Right ventricle myocardium superior (tissue), 1 donor: ENCODE measurements at regions of chr1 and their contacts with region 1.

Region 1: GRCh38 chr1:180631766-180632325 is at the start of gene XPR1:
- DNase-seq: peak; percentile 97
- ATAC-seq: peak; percentile 97
- total RNA-seq, gene XPR1: 38.6 TPM

Region 2: DNA sequence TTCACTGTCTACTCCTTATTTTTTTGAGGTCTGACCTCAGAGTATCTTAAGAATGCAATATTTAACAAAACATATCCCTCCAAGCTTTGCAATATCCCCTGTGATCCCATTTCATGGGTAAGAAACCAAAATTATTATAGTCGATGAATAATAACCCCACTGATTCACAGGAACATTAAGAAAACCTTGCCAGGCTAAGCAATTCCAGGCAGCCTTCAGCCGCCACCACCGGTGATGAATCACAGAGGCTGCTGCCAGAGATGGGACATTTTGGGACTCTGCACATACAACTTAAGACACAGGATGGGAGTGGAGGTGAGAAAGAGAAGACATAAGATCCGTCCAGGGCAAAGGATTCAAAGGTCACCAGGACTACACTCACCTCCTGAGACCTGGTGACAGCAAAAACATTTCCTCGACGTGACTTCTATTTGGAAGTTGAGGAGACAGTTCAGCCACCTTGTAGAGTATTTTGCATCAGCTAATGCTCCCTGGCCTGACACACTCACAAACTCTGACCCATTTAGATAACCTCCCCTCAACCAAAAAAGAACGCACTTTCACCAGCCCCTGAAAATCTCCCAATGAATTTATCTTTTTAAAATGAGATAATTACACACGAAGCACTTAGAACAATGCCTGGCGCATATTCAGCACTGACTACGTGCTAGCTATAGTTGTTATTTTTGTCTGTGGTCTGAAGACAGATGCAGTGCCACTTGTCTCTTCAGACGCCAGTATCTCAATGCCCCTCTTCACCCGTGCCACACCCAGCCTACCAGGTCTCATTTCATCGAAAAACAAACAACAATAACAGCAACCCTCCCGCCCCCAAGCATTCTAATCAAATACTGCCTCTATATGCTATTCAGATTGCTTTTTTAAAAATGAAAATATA is 90.9 kb before region 1 on chr1:
- intact Hi-C with region 1: loop called (anchors 5 kb)
- DNase-seq: no peak
- ATAC-seq: peak; percentile 71

Region 3: GRCh38 chr1:180849036-180849775 is 217.4 kb after region 1 on chr1:
- intact Hi-C with region 1: loop called (anchors 10 kb)
- DNase-seq: no peak
- ATAC-seq: no peak